Activated CD4-positive, alpha-beta memory T cell treated with anti-CD3 and anti-CD28 coated beads for 36 hours (primary cell): ENCODE measurements at regions of chr7 and their contacts with region 1.

Region 1: GRCh38 chr7:26667500-26668133 is 196.8 kb downstream of the SKAP2 start:
- DNase-seq: peak; percentile 61
- H3K4me3 Mint-ChIP-seq: no peak overlapping the region
- H3K27ac Mint-ChIP-seq: no peak overlapping the region
- H3K4me1 Mint-ChIP-seq: peaks cover 19% of the 10 kb centered on the region
- H3K27me3 Mint-ChIP-seq: no peaks in the 10 kb centered on the region

Region 2: GRCh38 chr7:26078437-26079336 is 588.9 kb before region 1 on chr7:
- CTCF ChIA-PET with region 1: no interaction called
- POLR2A ChIA-PET with region 1: no interaction called
- intact Hi-C with region 1: loop called (anchors 5 kb)
- DNase-seq: peak; percentile 87
- H3K4me3 Mint-ChIP-seq: no peak overlapping the region
- H3K27ac Mint-ChIP-seq: no peak overlapping the region
- H3K4me1 Mint-ChIP-seq: peaks cover 4% of the 10 kb centered on the region
- H3K27me3 Mint-ChIP-seq: peaks cover 24% of the 10 kb centered on the region

Region 3: DNA sequence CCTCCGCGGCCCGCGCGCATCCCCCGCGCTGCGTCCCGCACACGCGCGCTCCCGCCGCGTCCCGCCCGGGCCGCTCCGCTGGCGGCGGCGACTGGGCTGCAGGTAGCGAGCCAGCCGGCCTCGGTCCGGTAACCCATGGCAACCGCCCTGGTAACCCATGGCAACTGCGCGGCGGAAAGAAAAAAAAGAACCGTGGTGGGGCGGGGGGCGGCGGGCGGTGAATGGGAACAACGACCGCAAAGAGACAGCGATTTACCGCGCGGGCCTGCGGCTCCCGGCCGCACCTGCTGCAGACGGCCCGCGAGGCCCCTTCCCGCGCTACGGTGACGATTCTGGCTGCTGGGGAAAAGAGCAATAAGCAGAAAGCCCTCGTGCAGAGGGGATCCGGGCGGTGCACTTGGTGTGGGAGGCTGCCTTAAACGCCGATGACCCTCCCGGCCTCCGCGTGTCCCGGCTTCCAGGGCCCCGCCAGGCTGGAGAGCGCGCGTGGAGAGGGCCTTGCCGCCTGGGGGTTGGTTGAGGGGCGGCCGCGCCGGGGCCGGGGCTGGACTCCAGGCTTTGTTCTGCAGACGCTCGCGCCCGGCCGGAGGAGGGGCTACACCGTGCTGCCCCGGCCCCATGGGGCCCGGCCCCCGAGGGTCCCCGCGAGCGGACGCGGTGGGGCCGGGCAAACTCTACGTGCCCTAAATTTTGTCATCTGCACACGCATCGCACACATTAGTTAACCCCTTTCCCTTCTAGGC is 291.3 kb before region 1 on chr7:
- CTCF ChIA-PET with region 1: interaction called, 10 read pairs
- POLR2A ChIA-PET with region 1: no interaction called
- intact Hi-C with region 1: loop called (anchors 1 kb)
- DNase-seq: peak; percentile 56
- H3K4me3 Mint-ChIP-seq: peak overlapping the region; percentile 73
- H3K27ac Mint-ChIP-seq: no peak overlapping the region
- H3K4me1 Mint-ChIP-seq: no peaks in the 10 kb centered on the region
- H3K27me3 Mint-ChIP-seq: peaks cover 27% of the 10 kb centered on the region

Region 4: GRCh38 chr7:26500749-26501352 is 166.8 kb before region 1 on chr7:
- CTCF ChIA-PET with region 1: interaction called, 3 read pairs
- POLR2A ChIA-PET with region 1: no interaction called
- intact Hi-C with region 1: loop called (anchors 5 kb)
- DNase-seq: no peak
- H3K4me3 Mint-ChIP-seq: no peak overlapping the region
- H3K27ac Mint-ChIP-seq: no peak overlapping the region
- H3K4me1 Mint-ChIP-seq: no peaks in the 10 kb centered on the region
- H3K27me3 Mint-ChIP-seq: peaks cover 10% of the 10 kb centered on the region

Region 5: GRCh38 chr7:26686448-26686981 is 18.9 kb after region 1 on chr7:
- CTCF ChIA-PET with region 1: interaction called, 15 read pairs
- POLR2A ChIA-PET with region 1: no interaction called
- intact Hi-C with region 1: no loop called
- DNase-seq: no peak
- H3K4me3 Mint-ChIP-seq: no peak overlapping the region
- H3K27ac Mint-ChIP-seq: no peak overlapping the region
- H3K4me1 Mint-ChIP-seq: no peaks in the 10 kb centered on the region
- H3K27me3 Mint-ChIP-seq: peaks cover 13% of the 10 kb centered on the region